CD4-positive, alpha-beta T cell (primary cell): ENCODE measurements at regions of chr19 and their contacts with region 1.

Region 1: DNA sequence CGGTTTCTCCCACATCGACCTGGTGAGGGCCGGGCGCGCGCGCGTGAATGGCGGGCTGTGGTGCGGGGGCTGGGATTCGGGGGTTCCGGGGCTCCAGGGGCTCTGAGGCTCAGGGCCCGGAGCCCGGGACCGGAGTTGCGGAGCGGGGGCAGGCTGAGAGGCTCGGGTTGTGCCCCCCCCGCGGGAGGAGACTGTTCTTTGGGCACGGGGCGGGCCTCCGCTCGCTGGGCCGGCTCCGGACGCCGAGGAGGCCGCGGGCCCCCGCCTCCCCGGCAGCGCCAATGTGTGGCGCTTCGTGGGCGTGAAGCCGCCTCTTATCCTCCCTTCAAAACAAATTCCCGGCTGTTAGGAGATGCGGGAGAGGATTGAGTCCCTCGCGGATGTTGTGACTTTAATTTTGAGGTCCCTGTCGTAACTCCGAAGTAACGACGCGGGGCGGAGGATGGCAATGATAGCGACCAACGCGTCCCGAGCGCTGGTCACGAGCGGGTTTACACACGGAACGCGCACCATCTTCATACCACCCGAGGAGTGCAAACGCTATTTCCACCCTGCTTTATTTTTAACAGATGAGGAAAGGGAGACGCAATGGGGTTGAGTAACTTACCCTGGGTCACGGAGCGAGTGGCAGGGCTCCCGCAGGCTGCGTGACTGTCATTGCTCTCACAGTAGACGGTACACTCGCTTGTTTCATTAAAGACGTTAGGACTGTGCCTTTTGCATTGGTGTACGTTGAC is 536 bp downstream of the UBA2 start:
- DNase-seq: peak in 8 of 14 experiments; percentile 1 to 64 (median 22)
- ATAC-seq: peak; percentile 37
- H3K4me3 ChIP-seq: peak overlapping the region; percentile 88
- H3K4me3 Mint-ChIP-seq: peak overlapping the region; percentile 99
- H3K27ac ChIP-seq: peak overlapping the region; percentile 66 to 91
- H3K27ac Mint-ChIP-seq: peak overlapping the region; percentile 95
- H3K4me1 ChIP-seq: peaks cover 27% of the 10 kb centered on the region
- H3K4me1 Mint-ChIP-seq: peaks cover 41% of the 10 kb centered on the region
- H3K27me3 ChIP-seq: no peaks in the 10 kb centered on the region
- H3K27me3 Mint-ChIP-seq: no peaks in the 10 kb centered on the region
- CTCF ChIP-seq: no peak

Region 2: GRCh38 chr19:34120846-34121639 is 307.7 kb before region 1 on chr19:
- CTCF ChIA-PET with region 1: no interaction called
- POLR2A ChIA-PET with region 1: no interaction called
- intact Hi-C with region 1: loop called in 1 of 2 experiments (anchors 5 kb)
- DNase-seq: peak; percentile 23 to 74 (median 50)
- ATAC-seq: peak; percentile 73
- H3K4me3 ChIP-seq: no peak overlapping the region
- H3K4me3 Mint-ChIP-seq: no peak overlapping the region
- H3K27ac ChIP-seq: no peak overlapping the region
- H3K27ac Mint-ChIP-seq: peak overlapping the region; percentile 4
- H3K4me1 ChIP-seq: no peaks in the 10 kb centered on the region
- H3K4me1 Mint-ChIP-seq: peaks cover 21% of the 10 kb centered on the region
- H3K27me3 ChIP-seq: no peaks in the 10 kb centered on the region
- H3K27me3 Mint-ChIP-seq: peaks cover 4% of the 10 kb centered on the region
- CTCF ChIP-seq: peak; percentile 80

Region 3: GRCh38 chr19:34220472-34221063 is 208.1 kb before region 1 on chr19:
- CTCF ChIA-PET with region 1: no interaction called
- POLR2A ChIA-PET with region 1: no interaction called
- intact Hi-C with region 1: loop called in 1 of 2 experiments (anchors 5 kb)
- DNase-seq: peak; percentile 38 to 79 (median 51)
- ATAC-seq: no peak
- H3K4me3 ChIP-seq: no peak overlapping the region
- H3K4me3 Mint-ChIP-seq: no peak overlapping the region
- H3K27ac ChIP-seq: no peak overlapping the region
- H3K27ac Mint-ChIP-seq: peak overlapping the region; percentile 28
- H3K4me1 ChIP-seq: peaks cover 39% of the 10 kb centered on the region
- H3K4me1 Mint-ChIP-seq: peaks cover 61% of the 10 kb centered on the region
- H3K27me3 ChIP-seq: no peaks in the 10 kb centered on the region
- H3K27me3 Mint-ChIP-seq: no peaks in the 10 kb centered on the region
- CTCF ChIP-seq: peak; percentile 74

Region 4: GRCh38 chr19:34260771-34261173 is 167.9 kb before region 1 on chr19:
- CTCF ChIA-PET with region 1: no interaction called
- POLR2A ChIA-PET with region 1: no interaction called
- intact Hi-C with region 1: no loop called
- DNase-seq: no peak
- ATAC-seq: no peak
- H3K4me3 ChIP-seq: no peak overlapping the region
- H3K4me3 Mint-ChIP-seq: peak overlapping the region; percentile 56
- H3K27ac ChIP-seq: no peak overlapping the region
- H3K27ac Mint-ChIP-seq: peak overlapping the region; percentile 82
- H3K4me1 ChIP-seq: peaks cover 49% of the 10 kb centered on the region
- H3K4me1 Mint-ChIP-seq: peaks cover 78% of the 10 kb centered on the region
- H3K27me3 ChIP-seq: no peaks in the 10 kb centered on the region
- H3K27me3 Mint-ChIP-seq: no peaks in the 10 kb centered on the region
- CTCF ChIP-seq: no peak

Region 5: GRCh38 chr19:34359140-34359953 is 69.4 kb before region 1 on chr19:
- CTCF ChIA-PET with region 1: interaction called, 4 read pairs
- POLR2A ChIA-PET with region 1: interaction called, 5 read pairs
- intact Hi-C with region 1: loop called (anchors 2 kb)
- DNase-seq: peak; percentile 80 to 98 (median 93)
- ATAC-seq: peak; percentile 87
- H3K4me3 ChIP-seq: peak overlapping the region; percentile 66
- H3K4me3 Mint-ChIP-seq: peak overlapping the region; percentile 89
- H3K27ac ChIP-seq: peak overlapping the region; percentile 57 to 58
- H3K27ac Mint-ChIP-seq: peak overlapping the region; percentile 90
- H3K4me1 ChIP-seq: peaks cover 24% of the 10 kb centered on the region
- H3K4me1 Mint-ChIP-seq: peaks cover 31% of the 10 kb centered on the region
- H3K27me3 ChIP-seq: no peaks in the 10 kb centered on the region
- H3K27me3 Mint-ChIP-seq: no peaks in the 10 kb centered on the region
- CTCF ChIP-seq: peak; percentile 74